Thyroid gland (tissue), 4 donors: ENCODE measurements at regions of chr3 and their contacts with region 1.

Region 1: DNA sequence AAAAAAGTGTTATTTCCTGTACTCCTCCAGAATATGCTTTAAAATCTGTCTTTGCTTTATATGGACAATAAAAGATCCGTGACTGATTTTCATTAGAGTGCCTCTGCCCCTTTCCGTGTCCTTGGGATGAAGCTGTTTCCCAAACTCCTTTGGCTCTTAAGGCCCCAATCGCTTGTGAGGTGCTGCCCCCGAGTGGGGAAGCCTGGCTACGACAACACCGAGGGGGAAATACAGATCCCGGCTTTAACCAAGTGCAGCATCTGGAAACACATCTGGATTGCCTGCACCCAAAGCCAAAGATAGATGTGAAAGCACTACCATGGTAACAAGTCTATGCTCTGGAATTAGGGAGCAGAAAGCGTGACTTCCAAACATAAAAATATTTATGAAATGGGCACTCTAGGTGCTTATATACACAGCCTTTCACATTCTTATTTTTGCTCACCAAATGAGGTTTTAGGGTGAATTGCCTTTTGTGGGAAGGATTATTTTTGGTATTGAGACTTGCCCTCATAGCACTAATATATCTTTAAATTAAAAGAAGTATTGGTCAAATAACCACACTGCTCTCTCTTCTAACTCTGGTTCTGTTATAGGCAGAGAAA is 40.6 kb upstream of the ADCY5 start:
- DNase-seq: peak; percentile 60 to 65
- H3K4me3 ChIP-seq: no peak overlapping the region
- H3K27ac ChIP-seq: no peak overlapping the region
- H3K4me1 ChIP-seq: no peaks in the 10 kb centered on the region
- H3K27me3 ChIP-seq: no peaks in the 10 kb centered on the region
- CTCF ChIP-seq: peak; percentile 52 to 84 (median 68)
- POLR2A ChIP-seq: no peak

Region 2: GRCh38 chr3:123096731-123097130 is 392.8 kb before region 1 on chr3:
- intact Hi-C with region 1: no loop called
- DNase-seq: peak; percentile 66 to 76
- H3K4me3 ChIP-seq: no peak overlapping the region
- H3K27ac ChIP-seq: no peak overlapping the region
- H3K4me1 ChIP-seq: peaks cover 26 to 40% of the 10 kb centered on the region in 2 donors
- H3K27me3 ChIP-seq: no peaks in the 10 kb centered on the region
- CTCF ChIP-seq: no peak
- POLR2A ChIP-seq: no peak

Region 3: DNA sequence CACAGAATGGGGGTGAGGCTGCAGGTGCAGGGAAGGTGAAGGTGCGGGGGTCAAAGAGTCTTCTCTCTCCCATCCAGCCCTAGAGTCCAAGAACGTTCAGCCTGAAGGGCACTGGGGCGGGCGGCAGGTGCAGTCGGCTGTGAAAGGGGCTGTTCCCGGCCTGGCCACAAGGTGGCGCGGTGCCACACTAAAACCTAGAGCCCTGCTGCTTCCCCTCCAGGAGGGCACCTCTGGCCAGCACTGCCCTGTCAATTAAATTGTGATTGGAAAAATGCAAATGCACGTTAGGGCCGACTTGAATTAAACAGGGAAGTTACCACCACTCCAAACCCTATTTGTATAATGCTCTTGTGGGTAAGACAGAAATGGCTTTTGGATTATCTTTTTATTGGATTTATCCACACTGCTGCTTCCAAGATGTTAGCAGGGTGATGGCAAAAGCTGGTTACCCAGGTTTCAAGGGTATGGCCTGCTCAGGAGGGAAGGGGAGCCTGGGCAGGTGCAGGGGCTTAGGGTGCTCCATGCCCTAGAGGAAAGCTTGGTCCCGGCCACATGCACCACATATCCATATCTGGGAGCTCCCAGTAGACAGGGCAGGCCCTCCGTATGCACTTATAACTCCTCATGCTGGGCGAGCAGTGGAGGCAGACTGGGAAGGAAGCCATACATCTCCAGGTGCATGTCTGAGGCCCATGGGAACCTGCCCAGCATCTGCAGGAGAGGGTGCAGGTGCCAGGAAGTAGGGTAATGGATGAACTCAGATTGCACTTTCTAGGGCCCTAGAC is 160.5 kb before region 1 on chr3:
- intact Hi-C with region 1: loop called (anchors 5 kb)
- DNase-seq: peak; percentile 79 to 80
- H3K4me3 ChIP-seq: no peak overlapping the region
- H3K27ac ChIP-seq: no peak overlapping the region
- H3K4me1 ChIP-seq: no peaks in the 10 kb centered on the region
- H3K27me3 ChIP-seq: no peaks in the 10 kb centered on the region
- CTCF ChIP-seq: peak; percentile 77 to 94 (median 85)
- POLR2A ChIP-seq: no peak

Region 4: GRCh38 chr3:123559040-123559861 is 69.7 kb after region 1 on chr3:
- intact Hi-C with region 1: loop called (anchors 10 kb)
- DNase-seq: no peak
- H3K4me3 ChIP-seq: no peak overlapping the region
- H3K27ac ChIP-seq: no peak overlapping the region
- H3K4me1 ChIP-seq: no peaks in the 10 kb centered on the region
- H3K27me3 ChIP-seq: no peaks in the 10 kb centered on the region
- CTCF ChIP-seq: peak; percentile 44 to 76 (median 66)
- POLR2A ChIP-seq: no peak

Region 5: DNA sequence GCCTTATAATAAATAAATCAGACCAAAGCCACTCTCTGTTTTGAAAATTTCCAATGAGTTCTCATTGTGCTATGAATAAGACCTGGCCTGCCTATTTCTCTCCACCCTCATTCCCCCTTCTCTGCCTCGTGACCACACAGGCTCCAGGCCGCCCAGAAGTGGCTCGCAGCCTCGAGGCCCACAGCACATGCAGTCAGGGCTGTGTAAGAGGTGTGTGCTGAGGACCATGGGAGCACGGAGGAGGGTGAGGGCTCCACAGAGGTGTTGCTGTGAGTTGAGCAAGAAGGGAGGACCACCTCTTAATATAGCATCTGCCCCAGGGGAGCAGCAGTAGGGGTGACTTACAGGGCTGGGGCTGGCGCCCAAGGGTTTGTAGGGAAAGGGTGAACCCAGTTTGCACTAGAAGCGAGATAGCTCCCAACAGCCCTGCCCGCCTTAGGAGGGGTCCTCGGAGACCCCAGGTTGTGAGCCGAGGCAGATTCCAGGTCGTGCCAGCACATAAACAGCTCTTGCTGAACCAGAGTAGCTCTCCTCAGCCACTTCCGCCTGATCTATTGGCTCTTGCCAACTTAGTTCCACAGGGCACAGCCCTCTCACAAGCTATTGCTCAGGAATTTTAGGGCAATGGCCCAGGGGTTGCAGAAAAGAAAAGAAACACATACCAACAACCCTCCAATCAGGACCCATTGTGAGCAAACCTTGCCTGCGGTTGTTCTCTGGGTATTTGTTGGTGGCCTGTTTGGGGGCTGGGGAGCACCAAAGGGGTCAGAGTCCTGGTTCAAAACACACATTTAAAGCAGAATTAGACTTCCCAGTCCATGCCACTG is 276.9 kb after region 1 on chr3:
- intact Hi-C with region 1: no loop called
- DNase-seq: no peak
- H3K4me3 ChIP-seq: no peak overlapping the region
- H3K27ac ChIP-seq: no peak overlapping the region
- H3K4me1 ChIP-seq: no peaks in the 10 kb centered on the region
- H3K27me3 ChIP-seq: no peaks in the 10 kb centered on the region
- CTCF ChIP-seq: no peak
- POLR2A ChIP-seq: no peak